ENCODE measurements at regions of chr7 and their contacts with region 1.

Region 1: DNA sequence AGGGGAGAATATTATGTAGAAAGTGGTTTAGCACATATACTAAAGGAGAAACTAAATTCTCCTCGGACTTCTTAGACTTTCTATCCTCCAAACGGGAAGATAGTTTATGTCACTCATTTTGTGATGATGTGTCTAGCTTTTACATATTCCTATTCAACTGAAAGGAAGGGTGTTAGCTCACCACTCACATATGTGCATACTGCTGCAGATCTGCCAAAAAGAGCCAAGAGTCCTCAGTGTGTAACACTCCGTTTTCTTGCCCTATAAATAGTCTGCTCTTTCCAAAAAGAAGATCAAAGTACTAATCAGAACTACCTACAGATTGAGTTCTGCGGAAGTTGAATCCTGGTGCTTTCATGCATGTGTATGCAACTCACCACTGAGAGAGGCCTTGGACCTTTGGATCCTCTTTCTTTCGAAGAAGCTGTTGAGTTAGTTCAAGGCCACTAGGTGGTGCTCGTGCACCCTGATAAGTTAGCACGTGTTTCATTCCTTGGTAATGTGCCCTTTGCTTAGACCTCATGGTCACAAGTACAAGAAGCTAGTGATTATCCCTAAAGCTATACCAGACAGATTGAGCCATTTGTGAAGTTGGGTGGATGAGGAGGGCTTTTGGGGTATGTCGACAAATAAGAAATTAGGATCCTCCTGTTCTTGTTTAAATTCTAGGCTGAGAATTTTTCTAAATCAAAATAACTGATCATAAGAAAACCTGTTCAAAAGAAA is 14.1 kb downstream of the YAE1 start:
- DNase-seq: peak; percentile 87
- ATAC-seq: peak; percentile 95
- H3K4me3 Mint-ChIP-seq: no peak overlapping the region
- H3K27ac Mint-ChIP-seq: peak overlapping the region; percentile 73
- H3K4me1 Mint-ChIP-seq: peaks cover 15% of the 10 kb centered on the region
- H3K27me3 Mint-ChIP-seq: no peaks in the 10 kb centered on the region
- CTCF ChIP-seq: peak; percentile 83

Region 2: GRCh38 chr7:39336442-39336841 is 243.9 kb before region 1 on chr7:
- CTCF ChIA-PET with region 1: no interaction called
- POLR2A ChIA-PET with region 1: no interaction called
- intact Hi-C with region 1: no loop called
- DNase-seq: no peak
- ATAC-seq: no peak
- H3K4me3 Mint-ChIP-seq: no peak overlapping the region
- H3K27ac Mint-ChIP-seq: no peak overlapping the region
- H3K4me1 Mint-ChIP-seq: no peaks in the 10 kb centered on the region
- H3K27me3 Mint-ChIP-seq: peaks cover 7% of the 10 kb centered on the region
- CTCF ChIP-seq: no peak

Region 3: GRCh38 chr7:39367943-39368342 is 212.4 kb before region 1 on chr7:
- CTCF ChIA-PET with region 1: no interaction called
- POLR2A ChIA-PET with region 1: no interaction called
- intact Hi-C with region 1: no loop called
- DNase-seq: no peak
- ATAC-seq: no peak
- H3K4me3 Mint-ChIP-seq: no peak overlapping the region
- H3K27ac Mint-ChIP-seq: no peak overlapping the region
- H3K4me1 Mint-ChIP-seq: no peaks in the 10 kb centered on the region
- H3K27me3 Mint-ChIP-seq: peaks cover 3% of the 10 kb centered on the region
- CTCF ChIP-seq: no peak

Region 4: DNA sequence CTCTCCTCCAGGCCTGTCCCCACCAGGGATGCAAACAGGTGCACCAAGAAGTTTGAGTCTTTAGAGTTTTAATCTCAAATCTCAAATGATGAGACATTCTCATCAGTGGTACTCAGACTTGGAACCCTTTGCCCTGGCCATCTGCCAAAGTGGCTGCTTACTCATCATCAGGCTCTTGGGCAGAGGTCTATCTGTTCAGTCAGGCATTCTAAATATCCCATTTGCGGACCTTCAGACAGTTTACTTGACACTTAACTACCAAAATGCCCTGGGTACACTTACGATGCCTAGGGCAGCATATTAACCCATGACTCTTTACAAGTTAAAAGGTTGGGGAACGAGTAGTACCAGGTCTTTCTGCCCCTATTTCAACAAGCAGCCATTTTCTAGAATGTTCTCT is 75.3 kb before region 1 on chr7:
- CTCF ChIA-PET with region 1: no interaction called
- POLR2A ChIA-PET with region 1: no interaction called
- intact Hi-C with region 1: no loop called
- DNase-seq: peak; percentile 39
- ATAC-seq: no peak
- H3K4me3 Mint-ChIP-seq: no peak overlapping the region
- H3K27ac Mint-ChIP-seq: no peak overlapping the region
- H3K4me1 Mint-ChIP-seq: peaks cover 18% of the 10 kb centered on the region
- H3K27me3 Mint-ChIP-seq: peaks cover 3% of the 10 kb centered on the region
- CTCF ChIP-seq: no peak

Region 5: GRCh38 chr7:39602351-39602750 is 22.0 kb after region 1 on chr7:
- CTCF ChIA-PET with region 1: interaction called, 15 read pairs
- POLR2A ChIA-PET with region 1: no interaction called
- intact Hi-C with region 1: no loop called
- DNase-seq: no peak
- ATAC-seq: no peak
- H3K4me3 Mint-ChIP-seq: no peak overlapping the region
- H3K27ac Mint-ChIP-seq: no peak overlapping the region
- H3K4me1 Mint-ChIP-seq: peaks cover 27% of the 10 kb centered on the region
- H3K27me3 Mint-ChIP-seq: no peaks in the 10 kb centered on the region
- CTCF ChIP-seq: no peak

Region 6: GRCh38 chr7:39623018-39623731 is 42.9 kb after region 1 on chr7 and contains the start of gene RALA:
- CTCF ChIA-PET with region 1: interaction called, 59 read pairs
- POLR2A ChIA-PET with region 1: interaction called, 3 read pairs
- intact Hi-C with region 1: loop called (anchors 5 kb)
- DNase-seq: peak; percentile 90
- ATAC-seq: peak; percentile 96
- H3K4me3 Mint-ChIP-seq: peak within 1 kb of the TSS; percentile 99
- H3K27ac Mint-ChIP-seq: peak within 1 kb of the TSS; percentile 95
- H3K4me1 Mint-ChIP-seq: peaks cover 47% of the 10 kb centered on the region
- H3K27me3 Mint-ChIP-seq: no peaks in the 10 kb centered on the region
- CTCF ChIP-seq: no peak
- total RNA-seq, gene RALA: 32.5 to 32.8 TPM

Region 7: GRCh38 chr7:39732837-39733804 is 152.8 kb after region 1 on chr7:
- CTCF ChIA-PET with region 1: interaction called, 79 read pairs
- POLR2A ChIA-PET with region 1: interaction called, 4 read pairs
- intact Hi-C with region 1: loop called (anchors 5 kb)
- DNase-seq: peak; percentile 100
- ATAC-seq: peak; percentile 94
- H3K4me3 Mint-ChIP-seq: peak overlapping the region; percentile 96
- H3K27ac Mint-ChIP-seq: peak overlapping the region; percentile 90
- H3K4me1 Mint-ChIP-seq: peaks cover 38% of the 10 kb centered on the region
- H3K27me3 Mint-ChIP-seq: no peaks in the 10 kb centered on the region
- CTCF ChIP-seq: no peak

Region 8: DNA sequence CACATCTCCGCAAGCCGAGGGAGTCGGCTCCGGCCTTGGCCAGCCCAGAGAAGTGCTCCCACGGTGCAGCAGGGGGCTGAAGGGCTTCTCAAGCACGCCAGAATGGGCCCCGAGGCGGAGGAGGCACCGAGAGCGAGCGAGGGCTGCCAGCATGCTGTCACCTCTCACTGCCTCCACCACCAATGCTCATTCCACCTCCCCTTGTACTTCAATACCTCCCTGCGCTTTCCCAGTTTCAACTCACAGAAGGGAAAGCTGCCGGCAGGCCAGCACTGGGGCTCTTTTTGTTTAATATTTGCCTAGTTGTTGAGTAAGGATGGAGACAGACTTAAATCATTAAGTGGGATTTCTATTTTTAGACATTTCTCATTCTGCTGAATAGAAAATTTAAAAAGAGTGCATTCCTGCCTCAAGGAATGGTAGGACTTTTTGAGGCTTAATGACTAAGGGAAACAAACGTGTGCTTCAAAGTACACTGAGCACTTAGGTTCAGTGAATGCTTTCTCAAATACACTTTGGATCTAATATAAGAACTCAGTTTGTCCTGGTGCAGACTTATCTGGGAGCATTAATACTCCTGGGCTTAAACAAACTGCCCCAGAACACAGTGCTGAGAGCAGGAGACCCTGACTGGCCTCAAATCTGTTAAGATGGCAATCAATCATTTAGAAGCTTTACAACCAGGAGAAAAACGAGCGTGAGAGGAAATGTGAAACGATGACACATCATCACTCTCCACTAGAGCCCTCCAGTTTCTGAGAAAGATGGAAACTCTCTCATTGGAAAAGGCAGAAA is 174.2 kb after region 1 on chr7:
- CTCF ChIA-PET with region 1: interaction called, 364 read pairs
- POLR2A ChIA-PET with region 1: interaction called, 3 read pairs
- intact Hi-C with region 1: no loop called
- DNase-seq: no peak
- ATAC-seq: peak; percentile 79
- H3K4me3 Mint-ChIP-seq: no peak overlapping the region
- H3K27ac Mint-ChIP-seq: peak overlapping the region; percentile 78
- H3K4me1 Mint-ChIP-seq: peaks cover 19% of the 10 kb centered on the region
- H3K27me3 Mint-ChIP-seq: no peaks in the 10 kb centered on the region
- CTCF ChIP-seq: no peak

Measured in activated CD8-positive, alpha-beta T cell treated with anti-CD3 and anti-CD28 coated beads for 36 hours (primary cell).